H1 (cell line): ENCODE measurements at regions of chr11 and their contacts with region 1.

Region 1: DNA sequence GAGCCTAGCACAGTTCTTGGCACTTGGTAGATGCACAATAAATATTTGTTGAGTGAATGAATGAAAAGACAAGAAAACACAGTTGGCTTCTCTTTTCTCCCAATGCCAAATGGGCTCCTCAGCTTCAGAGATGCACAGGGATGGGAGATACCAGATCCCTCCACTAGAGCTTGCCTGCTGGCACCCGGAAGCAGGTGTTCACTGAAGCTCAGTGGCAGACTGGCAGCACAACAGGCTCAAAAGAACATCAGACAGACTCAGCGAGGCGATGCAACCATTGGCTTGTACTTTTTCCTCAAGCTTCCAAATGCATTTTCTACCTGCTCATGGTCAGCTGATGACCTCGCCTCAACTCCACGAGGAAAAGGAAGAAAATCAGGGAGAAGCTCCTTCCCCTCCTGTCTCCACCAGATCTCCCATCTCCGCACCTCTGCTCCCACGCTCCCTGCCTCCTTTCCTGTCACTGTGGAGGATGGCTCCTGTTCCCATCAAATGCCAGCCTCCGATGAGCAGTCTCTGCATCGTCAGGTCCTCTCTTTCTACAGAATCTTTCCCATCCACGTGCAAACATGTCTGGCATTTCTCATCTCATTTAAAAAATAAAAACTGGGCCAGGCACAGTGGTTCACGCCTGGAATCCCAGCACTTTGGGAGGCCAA is 5.8 kb downstream of the RAPSN start:
- DNase-seq: no peak
- H3K4me3 ChIP-seq: no peak overlapping the region
- H3K27ac ChIP-seq: no peak overlapping the region
- H3K4me1 ChIP-seq: no peaks in the 10 kb centered on the region
- H3K27me3 ChIP-seq: no peaks in the 10 kb centered on the region
- CTCF ChIP-seq: peak; percentile 33 to 60 (median 45)
- EP300 ChIP-seq: no peak
- POLR2A ChIP-seq: no peak
- RAD21 ChIP-seq: peak in 1 of 2 experiments; percentile 15; a peak in 1 of 4 replicates

Region 2: DNA sequence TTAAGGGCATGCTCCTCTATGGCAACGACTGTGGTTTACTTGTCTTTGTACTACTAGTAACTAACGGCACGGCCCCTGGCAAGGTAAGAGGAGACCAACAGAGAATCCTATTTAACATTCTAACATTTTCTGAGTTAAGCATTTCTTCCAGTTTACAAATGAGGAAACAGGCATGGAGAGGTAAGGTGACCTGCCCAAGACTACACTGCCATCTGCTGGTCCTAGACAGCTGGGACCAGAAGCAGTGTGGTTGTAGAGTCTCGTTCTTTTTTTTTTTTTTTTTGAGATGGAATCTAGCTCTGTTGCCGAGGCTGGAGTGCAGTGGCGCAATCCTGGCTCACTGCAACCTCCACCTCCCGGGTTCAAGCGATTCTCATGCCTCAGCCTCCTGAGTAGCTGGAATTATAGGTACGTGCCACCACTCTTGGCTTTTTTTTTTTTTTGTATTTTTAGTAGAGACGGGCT is 11.0 kb after region 1 on chr11:
- CTCF ChIA-PET with region 1: interaction called, 21 read pairs
- POLR2A ChIA-PET with region 1: interaction called, 5 read pairs
- DNase-seq: no peak
- H3K4me3 ChIP-seq: no peak overlapping the region
- H3K27ac ChIP-seq: no peak overlapping the region
- H3K4me1 ChIP-seq: no peaks in the 10 kb centered on the region; a peak in 1 of 7 replicates
- H3K27me3 ChIP-seq: no peaks in the 10 kb centered on the region
- CTCF ChIP-seq: peak; percentile 75 to 82 (median 76)
- EP300 ChIP-seq: no peak
- POLR2A ChIP-seq: no peak
- RAD21 ChIP-seq: peak; percentile 79 to 81